GM12878 (cell line): ENCODE measurements at regions of chr15 and their contacts with region 1.

Region 1: DNA sequence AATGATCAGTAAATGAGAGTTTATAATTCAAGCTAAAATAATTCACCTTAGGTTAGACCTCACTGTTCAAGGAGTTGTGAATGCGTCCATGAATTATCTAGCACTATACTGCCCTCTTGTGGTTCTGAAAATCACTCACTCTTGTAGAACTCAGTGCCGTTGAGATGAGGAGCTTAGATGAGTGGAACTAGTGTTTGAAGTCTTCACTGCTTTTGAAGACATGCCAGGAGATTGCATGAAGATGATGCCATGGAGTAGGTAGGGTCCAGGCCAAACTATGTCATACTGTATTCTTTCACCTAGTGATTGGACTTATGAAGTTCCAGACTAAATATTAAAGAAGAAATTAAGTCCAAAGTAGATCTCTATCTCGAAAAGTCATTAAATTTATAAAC is 28.8 kb downstream of the LYSMD4 start:
- DNase-seq: peak; percentile 79
- ATAC-seq: peak; percentile 96
- H3K4me3 ChIP-seq: no peak overlapping the region
- H3K27ac ChIP-seq: no peak overlapping the region
- H3K4me1 ChIP-seq: peaks cover 27% of the 10 kb centered on the region
- H3K27me3 ChIP-seq: no peaks in the 10 kb centered on the region
- CTCF ChIP-seq: peak; percentile 65 to 84 (median 77)
- EP300 ChIP-seq: no peak
- POLR2A ChIP-seq: peak; percentile 36; the same call in 1 of the 2 replicates
- RAD21 ChIP-seq: peak; percentile 94

Region 2: GRCh38 chr15:98968576-98968975 is 735.9 kb before region 1 on chr15:
- CTCF ChIA-PET with region 1: no interaction called
- POLR2A ChIA-PET with region 1: no interaction called
- RAD21 ChIA-PET with region 1: no interaction called
- SMC1A ChIA-PET with region 1: no interaction called
- in situ Hi-C with region 1: no loop called
- intact Hi-C with region 1: no loop called
- DNase-seq: no peak
- ATAC-seq: no peak
- H3K4me3 ChIP-seq: no peak overlapping the region
- H3K27ac ChIP-seq: no peak overlapping the region
- H3K4me1 ChIP-seq: no peaks in the 10 kb centered on the region
- H3K27me3 ChIP-seq: no peaks in the 10 kb centered on the region
- CTCF ChIP-seq: no peak
- EP300 ChIP-seq: no peak
- POLR2A ChIP-seq: no peak
- RAD21 ChIP-seq: no peak

Region 3: DNA sequence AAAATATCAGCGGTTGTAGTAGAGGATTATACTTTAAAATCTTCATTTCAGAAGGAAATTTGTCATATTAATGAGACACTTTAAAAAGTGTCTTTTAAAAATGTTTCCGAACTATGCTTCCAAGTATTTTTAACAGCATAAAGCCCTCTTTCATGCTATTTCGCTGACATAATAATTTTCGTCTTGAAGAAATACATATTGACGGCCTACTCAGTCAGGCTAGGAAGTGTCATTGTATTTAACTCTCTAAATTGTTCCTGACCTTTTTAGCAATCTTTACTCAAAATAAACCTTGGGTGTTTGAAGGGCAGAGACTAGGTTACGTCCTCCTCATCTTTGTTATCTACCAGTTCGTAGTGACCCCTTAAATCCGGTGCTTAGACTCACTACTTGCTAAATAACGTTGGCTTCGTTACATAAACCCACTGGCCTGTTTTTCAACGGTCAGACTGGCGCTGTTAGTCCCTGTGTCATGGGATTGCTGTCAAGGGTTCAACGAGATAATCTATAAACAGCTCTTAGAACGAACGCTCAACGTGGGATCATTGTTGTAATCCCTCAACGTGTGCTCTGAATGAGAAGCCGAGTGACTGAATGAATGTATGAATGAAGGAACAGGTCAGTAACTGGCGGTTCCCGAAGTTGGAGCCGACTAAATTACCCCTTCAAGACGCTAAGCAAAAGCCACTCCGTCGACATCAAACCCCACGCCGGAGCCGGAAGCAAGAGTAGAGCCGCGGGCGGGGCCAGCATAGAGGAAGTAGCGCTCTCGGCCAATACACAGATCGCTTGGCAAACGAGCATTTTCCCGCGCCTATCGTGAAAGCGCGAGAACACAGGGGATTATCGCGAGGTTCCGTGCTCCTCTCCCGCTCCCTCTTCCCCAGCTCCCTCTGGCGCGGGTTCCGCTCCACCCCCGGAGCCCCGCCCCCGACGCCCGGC is 453.7 kb before region 1 on chr15:
- CTCF ChIA-PET with region 1: interaction called, 10 read pairs
- POLR2A ChIA-PET with region 1: interaction called, 3 read pairs
- RAD21 ChIA-PET with region 1: interaction called, 9 read pairs
- SMC1A ChIA-PET with region 1: interaction called, 16 read pairs
- in situ Hi-C with region 1: no loop called
- intact Hi-C with region 1: no loop called
- DNase-seq: peak; percentile 99
- ATAC-seq: peak; percentile 91
- H3K4me3 ChIP-seq: peak overlapping the region; percentile 75
- H3K27ac ChIP-seq: peak overlapping the region; percentile 84
- H3K4me1 ChIP-seq: peaks cover 11% of the 10 kb centered on the region
- H3K27me3 ChIP-seq: no peaks in the 10 kb centered on the region
- CTCF ChIP-seq: no peak
- EP300 ChIP-seq: no peak
- POLR2A ChIP-seq: peak; percentile 88
- RAD21 ChIP-seq: no peak

Region 4: GRCh38 chr15:99305761-99306505 is 398.5 kb before region 1 on chr15:
- CTCF ChIA-PET with region 1: interaction called, 11 read pairs
- POLR2A ChIA-PET with region 1: no interaction called
- RAD21 ChIA-PET with region 1: interaction called, 3 read pairs
- SMC1A ChIA-PET with region 1: interaction called, 9 read pairs
- in situ Hi-C with region 1: no loop called
- intact Hi-C with region 1: no loop called
- DNase-seq: no peak
- ATAC-seq: no peak
- H3K4me3 ChIP-seq: no peak overlapping the region
- H3K27ac ChIP-seq: no peak overlapping the region
- H3K4me1 ChIP-seq: no peaks in the 10 kb centered on the region
- H3K27me3 ChIP-seq: no peaks in the 10 kb centered on the region
- CTCF ChIP-seq: no peak
- EP300 ChIP-seq: no peak
- POLR2A ChIP-seq: no peak
- RAD21 ChIP-seq: no peak

Region 5: DNA sequence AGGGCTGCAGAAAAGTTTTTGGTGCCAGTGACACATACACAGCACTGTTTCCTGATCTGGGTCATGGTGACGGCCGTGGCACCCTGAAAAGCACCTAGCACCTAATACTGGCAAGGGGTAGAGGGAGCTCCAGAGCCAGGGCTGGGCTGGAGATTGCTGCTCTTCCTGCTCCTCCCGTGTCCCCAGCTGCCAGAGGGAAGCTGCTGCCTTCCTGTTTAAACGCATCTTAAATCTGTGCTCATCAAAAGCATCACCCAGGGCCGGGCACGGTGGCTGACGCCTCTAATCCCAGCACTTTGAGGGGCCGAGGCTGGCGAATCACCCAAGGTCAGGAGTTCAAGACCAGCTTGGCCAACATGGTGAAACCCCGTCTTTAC is 295.4 kb before region 1 on chr15:
- CTCF ChIA-PET with region 1: interaction called, 41 read pairs
- POLR2A ChIA-PET with region 1: no interaction called
- RAD21 ChIA-PET with region 1: interaction called, 39 read pairs
- SMC1A ChIA-PET with region 1: interaction called, 40 read pairs
- in situ Hi-C with region 1: no loop called
- intact Hi-C with region 1: no loop called
- DNase-seq: no peak
- ATAC-seq: peak; percentile 80
- H3K4me3 ChIP-seq: no peak overlapping the region
- H3K27ac ChIP-seq: no peak overlapping the region
- H3K4me1 ChIP-seq: no peaks in the 10 kb centered on the region
- H3K27me3 ChIP-seq: no peaks in the 10 kb centered on the region; a peak in 1 of 4 replicates
- CTCF ChIP-seq: peak; percentile 33 to 52 (median 45); a peak in 5 of 6 replicates
- EP300 ChIP-seq: no peak
- POLR2A ChIP-seq: no peak
- RAD21 ChIP-seq: peak; percentile 61

Region 6: GRCh38 chr15:99613887-99614647 is 90.4 kb before region 1 on chr15:
- CTCF ChIA-PET with region 1: interaction called, 11 read pairs
- POLR2A ChIA-PET with region 1: no interaction called
- RAD21 ChIA-PET with region 1: interaction called, 6 read pairs
- SMC1A ChIA-PET with region 1: interaction called, 4 read pairs
- in situ Hi-C with region 1: no loop called
- intact Hi-C with region 1: no loop called
- DNase-seq: no peak
- ATAC-seq: peak; percentile 69
- H3K4me3 ChIP-seq: no peak overlapping the region
- H3K27ac ChIP-seq: peak overlapping the region; percentile 20; the same call in 1 of the 2 replicates
- H3K4me1 ChIP-seq: peaks cover 20% of the 10 kb centered on the region
- H3K27me3 ChIP-seq: no peaks in the 10 kb centered on the region
- CTCF ChIP-seq: no peak
- EP300 ChIP-seq: no peak
- POLR2A ChIP-seq: no peak
- RAD21 ChIP-seq: no peak

Region 7: DNA sequence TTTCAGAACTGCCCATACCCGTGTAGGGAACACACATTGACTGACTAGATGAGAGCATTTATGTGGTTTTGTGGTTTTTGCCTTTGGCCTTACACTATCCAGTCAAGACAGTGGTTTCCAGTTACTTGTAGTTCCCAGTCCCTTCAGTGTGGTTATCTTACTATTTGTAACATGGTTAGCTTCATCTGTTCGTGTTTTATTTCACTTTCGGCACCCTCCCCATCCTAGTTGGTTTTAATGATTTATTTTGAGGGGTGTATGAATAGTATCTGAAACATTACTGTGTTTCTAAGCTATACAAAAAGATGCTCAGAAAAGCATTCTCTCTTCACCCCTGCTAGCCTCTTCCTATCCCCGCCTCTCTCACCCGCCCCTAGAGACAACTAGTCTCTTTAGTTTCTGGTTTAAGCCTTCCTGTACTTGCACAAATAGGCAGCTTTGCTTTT is 14.7 kb after region 1 on chr15:
- CTCF ChIA-PET with region 1: interaction called, 68 read pairs
- POLR2A ChIA-PET with region 1: interaction called, 4 read pairs
- RAD21 ChIA-PET with region 1: interaction called, 24 read pairs
- SMC1A ChIA-PET with region 1: interaction called, 28 read pairs
- in situ Hi-C with region 1: no loop called
- intact Hi-C with region 1: no loop called
- DNase-seq: peak; percentile 83
- ATAC-seq: peak; percentile 93
- H3K4me3 ChIP-seq: peak overlapping the region; percentile 30
- H3K27ac ChIP-seq: peak overlapping the region; percentile 76
- H3K4me1 ChIP-seq: peaks cover 42% of the 10 kb centered on the region
- H3K27me3 ChIP-seq: no peaks in the 10 kb centered on the region
- CTCF ChIP-seq: no peak
- EP300 ChIP-seq: peak; percentile 59 to 73; a peak in 3 of 4 replicates
- POLR2A ChIP-seq: no peak
- RAD21 ChIP-seq: no peak

Region 8: GRCh38 chr15:100020189-100020588 is 315.7 kb after region 1 on chr15:
- CTCF ChIA-PET with region 1: no interaction called
- POLR2A ChIA-PET with region 1: no interaction called
- RAD21 ChIA-PET with region 1: no interaction called
- SMC1A ChIA-PET with region 1: no interaction called
- in situ Hi-C with region 1: no loop called
- intact Hi-C with region 1: no loop called
- DNase-seq: no peak
- ATAC-seq: no peak
- H3K4me3 ChIP-seq: no peak overlapping the region
- H3K27ac ChIP-seq: no peak overlapping the region
- H3K4me1 ChIP-seq: no peaks in the 10 kb centered on the region; the same call in 1 of the 2 replicates
- H3K27me3 ChIP-seq: no peaks in the 10 kb centered on the region
- CTCF ChIP-seq: no peak
- EP300 ChIP-seq: no peak
- POLR2A ChIP-seq: no peak
- RAD21 ChIP-seq: no peak

Region 9: GRCh38 chr15:100771746-100772145 is 1067.3 kb after region 1 on chr15:
- CTCF ChIA-PET with region 1: no interaction called
- POLR2A ChIA-PET with region 1: no interaction called
- RAD21 ChIA-PET with region 1: no interaction called
- SMC1A ChIA-PET with region 1: no interaction called
- in situ Hi-C with region 1: no loop called
- intact Hi-C with region 1: no loop called
- DNase-seq: no peak
- ATAC-seq: no peak
- H3K4me3 ChIP-seq: no peak overlapping the region
- H3K27ac ChIP-seq: no peak overlapping the region
- H3K4me1 ChIP-seq: no peaks in the 10 kb centered on the region
- H3K27me3 ChIP-seq: no peaks in the 10 kb centered on the region; a peak in 1 of 4 replicates
- CTCF ChIP-seq: no peak
- EP300 ChIP-seq: no peak
- POLR2A ChIP-seq: no peak
- RAD21 ChIP-seq: no peak